Heart right ventricle (tissue), 16 donors: ENCODE measurements at regions of chr9 and their contacts with region 1.

Region 1: GRCh38 chr9:34633851-34634550 is 3.6 kb downstream of the SIGMAR1 start:
- DNase-seq: peak; percentile 61 to 64
- ATAC-seq: peak in 5 of 8 donors; percentile 8 to 36 (median 24)
- H3K4me3 ChIP-seq: no peak overlapping the region
- H3K27ac ChIP-seq: no peak overlapping the region
- H3K4me1 ChIP-seq: peaks cover 5 to 42% (median 27%) of the 10 kb centered on the region in 9 donors
- H3K27me3 ChIP-seq: peaks cover 0 to 21% (median 11%) of the 10 kb centered on the region in 7 donors
- CTCF ChIP-seq: peak; percentile 75 to 91 (median 86)

Region 2: DNA sequence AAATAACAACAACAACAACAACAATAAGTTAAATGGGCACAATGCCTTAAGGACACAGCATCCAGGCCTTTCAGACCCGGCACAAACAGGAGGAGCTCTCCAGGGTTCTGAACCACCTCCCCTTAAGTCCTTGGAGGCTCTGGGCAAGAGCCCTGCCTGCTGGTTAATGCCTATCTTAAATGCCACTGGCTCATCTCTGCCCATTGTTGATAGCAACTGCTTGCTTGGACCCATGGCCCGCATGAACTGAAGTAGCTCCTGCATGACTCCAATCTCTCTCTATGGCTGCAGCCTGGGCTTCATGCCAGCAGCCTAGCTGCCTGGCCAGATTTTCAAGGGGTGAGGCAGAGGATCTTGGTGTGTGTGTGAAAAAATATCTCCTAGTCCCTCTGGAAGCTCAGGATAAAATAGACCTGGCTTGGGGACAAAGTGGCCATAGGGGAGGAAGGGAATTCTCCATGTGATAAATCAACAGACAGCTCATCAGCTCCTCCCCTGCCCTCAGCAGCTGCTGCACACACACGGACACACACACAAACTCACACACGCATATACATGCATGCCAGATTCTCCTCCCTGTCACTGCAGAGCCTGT is 203.1 kb before region 1 on chr9:
- intact Hi-C with region 1: no loop called
- DNase-seq: peak; percentile 72 to 85
- ATAC-seq: peak; percentile 90 to 97 (median 96)
- H3K4me3 ChIP-seq: no peak overlapping the region
- H3K27ac ChIP-seq: no peak overlapping the region
- H3K4me1 ChIP-seq: peaks cover 0 to 43% (median 25%) of the 10 kb centered on the region in 9 donors
- H3K27me3 ChIP-seq: no peaks in the 10 kb centered on the region
- CTCF ChIP-seq: no peak

Region 3: DNA sequence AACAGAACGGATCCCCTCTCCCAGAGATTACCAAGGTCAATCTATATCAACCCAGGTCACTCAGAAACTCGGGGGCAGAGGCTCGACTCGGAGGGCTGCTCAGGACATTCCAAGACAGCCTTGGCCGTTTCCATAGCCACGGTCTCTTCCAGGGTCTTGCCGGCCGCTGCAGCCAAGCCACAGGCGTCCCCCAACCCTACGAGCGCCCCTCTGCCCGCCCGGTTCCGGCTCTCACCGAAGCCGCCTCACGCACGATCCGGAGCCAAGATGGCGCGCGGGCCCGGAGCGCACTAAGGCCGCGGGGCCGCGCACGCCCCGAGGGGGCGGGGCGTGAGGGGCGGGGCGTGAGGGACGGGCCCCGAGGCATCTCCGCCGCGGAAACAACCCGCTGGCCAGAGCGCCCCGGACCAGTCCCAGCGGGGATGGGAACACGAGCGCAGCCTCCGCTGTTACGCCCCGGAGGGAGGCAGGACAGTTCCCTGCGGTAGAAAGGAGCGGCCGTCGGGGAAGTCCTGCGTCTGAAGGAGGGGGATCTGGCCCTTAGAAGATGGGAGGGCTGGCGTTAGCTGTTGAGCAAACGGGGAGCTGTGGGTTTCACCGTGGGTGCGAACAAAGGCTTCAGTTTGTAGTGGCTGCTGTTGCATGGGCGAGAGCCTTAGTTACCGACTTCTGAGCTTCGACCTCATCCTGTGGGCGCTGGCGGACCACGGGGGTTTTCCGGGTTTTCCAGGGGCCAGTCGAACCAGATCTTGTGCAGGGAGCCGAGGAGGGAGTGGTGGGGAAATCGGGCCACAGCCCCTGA is 22.0 kb before region 1 on chr9 and contains the start of gene RPP25L:
- intact Hi-C with region 1: loop called in 7 of 10 experiments (anchors 1 to 2 kb)
- DNase-seq: peak; percentile 88 to 93
- ATAC-seq: peak; percentile 95 to 99 (median 97)
- H3K4me3 ChIP-seq: peak within 1 kb of the TSS; percentile 34 to 86 (median 79)
- H3K27ac ChIP-seq: peak within 1 kb of the TSS; percentile 71 to 98 (median 92)
- H3K4me1 ChIP-seq: peaks cover 2 to 31% (median 25%) of the 10 kb centered on the region in 9 donors
- H3K27me3 ChIP-seq: no peaks in the 10 kb centered on the region
- CTCF ChIP-seq: no peak
- total RNA-seq, gene RPP25L: 29.2 to 48.5 (median 39.2) TPM